ENCODE measurements at regions of chr17 and their contacts with region 1.

Region 1: GRCh38 chr17:49729069-49729468 is 21.3 kb upstream of the SLC35B1 start:
- DNase-seq: no peak
- H3K4me3 ChIP-seq: no peak overlapping the region
- H3K27ac ChIP-seq: no peak overlapping the region
- H3K4me1 ChIP-seq: no peaks in the 10 kb centered on the region
- H3K27me3 ChIP-seq: no peaks in the 10 kb centered on the region
- CTCF ChIP-seq: no peak

Region 2: DNA sequence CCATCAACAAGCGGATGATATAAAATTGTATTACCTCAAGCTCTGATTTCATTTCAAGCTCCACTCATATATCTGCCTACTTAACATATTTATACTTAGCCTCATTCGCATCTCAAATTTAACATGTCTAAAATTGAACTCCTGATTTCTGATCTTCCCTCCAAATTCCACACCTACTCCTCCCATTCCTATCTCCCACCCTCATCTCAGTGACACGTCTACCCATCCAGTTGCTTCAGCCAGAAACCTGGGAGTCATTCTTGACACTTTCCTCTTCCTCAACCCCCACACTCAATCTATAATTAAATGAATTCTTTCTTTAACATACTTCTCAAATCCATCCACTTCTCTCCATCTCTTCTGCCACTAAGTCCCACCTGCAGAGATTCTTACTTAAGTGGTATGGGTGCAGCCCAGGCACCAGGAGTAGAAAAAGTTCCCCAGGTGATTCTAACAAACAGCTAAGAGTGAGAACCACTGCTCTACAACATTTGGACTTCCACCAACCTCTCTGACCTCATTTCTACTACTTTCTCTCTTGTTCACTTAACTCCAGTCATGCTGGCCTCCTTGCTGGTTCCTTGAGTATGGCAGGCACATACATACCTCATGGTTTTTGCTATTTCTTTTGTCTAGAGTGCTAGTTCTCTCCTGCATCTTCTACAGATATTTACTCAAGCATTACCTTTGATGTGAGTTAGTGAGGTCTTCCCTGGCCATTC is 69.2 kb before region 1 on chr17:
- CTCF ChIA-PET with region 1: no interaction called
- dilution Hi-C with region 1: no loop called
- in situ Hi-C with region 1: no loop called
- intact Hi-C with region 1: no loop called
- DNase-seq: no peak
- H3K4me3 ChIP-seq: no peak overlapping the region
- H3K27ac ChIP-seq: no peak overlapping the region
- H3K4me1 ChIP-seq: no peaks in the 10 kb centered on the region
- H3K27me3 ChIP-seq: no peaks in the 10 kb centered on the region
- CTCF ChIP-seq: no peak

Region 3: GRCh38 chr17:49670002-49670401 is 59.1 kb before region 1 on chr17:
- CTCF ChIA-PET with region 1: no interaction called
- dilution Hi-C with region 1: loop called (anchors 5 kb)
- in situ Hi-C with region 1: no loop called
- intact Hi-C with region 1: no loop called
- DNase-seq: no peak
- H3K4me3 ChIP-seq: no peak overlapping the region
- H3K27ac ChIP-seq: no peak overlapping the region
- H3K4me1 ChIP-seq: no peaks in the 10 kb centered on the region
- H3K27me3 ChIP-seq: no peaks in the 10 kb centered on the region
- CTCF ChIP-seq: no peak

Region 4: GRCh38 chr17:49763735-49764558 is 34.9 kb after region 1 on chr17 and contains the start of gene FAM117A:
- CTCF ChIA-PET with region 1: no interaction called
- dilution Hi-C with region 1: loop called (anchors 5 kb)
- in situ Hi-C with region 1: no loop called
- intact Hi-C with region 1: no loop called
- DNase-seq: peak; percentile 99
- H3K4me3 ChIP-seq: peak within 1 kb of the TSS; percentile 58 to 73 (median 66)
- H3K27ac ChIP-seq: peak within 1 kb of the TSS; percentile 23
- H3K4me1 ChIP-seq: peaks cover 23% of the 10 kb centered on the region
- H3K27me3 ChIP-seq: no peaks in the 10 kb centered on the region
- CTCF ChIP-seq: no peak
- total RNA-seq, gene FAM117A: 2.8 to 5.9 TPM

Region 5: GRCh38 chr17:49779739-49780231 is 50.7 kb after region 1 on chr17:
- CTCF ChIA-PET with region 1: no interaction called
- dilution Hi-C with region 1: no loop called
- in situ Hi-C with region 1: no loop called
- intact Hi-C with region 1: no loop called
- DNase-seq: peak; percentile 81
- H3K4me3 ChIP-seq: no peak overlapping the region
- H3K27ac ChIP-seq: no peak overlapping the region
- H3K4me1 ChIP-seq: peaks cover 15% of the 10 kb centered on the region
- H3K27me3 ChIP-seq: no peaks in the 10 kb centered on the region
- CTCF ChIP-seq: peak; percentile 53 to 78

Region 6: DNA sequence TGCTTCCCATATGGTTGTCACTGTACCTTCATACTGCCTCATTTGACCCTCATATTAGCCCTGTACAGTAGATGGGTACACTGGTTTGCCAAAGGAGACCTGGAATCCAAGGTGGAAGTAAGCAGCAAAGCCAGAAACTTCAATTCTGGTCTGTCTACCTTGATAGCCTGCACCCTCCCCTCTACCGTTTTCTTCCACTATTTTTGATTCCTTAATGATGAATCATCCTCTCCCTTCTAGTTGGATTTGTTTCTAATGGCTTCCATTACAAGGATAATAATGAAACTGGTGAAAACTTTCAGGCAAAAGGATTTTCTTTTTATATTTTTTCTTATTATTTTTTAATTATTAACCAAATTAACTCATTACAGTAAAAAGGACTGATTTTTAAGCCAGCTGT is 101.5 kb after region 1 on chr17:
- CTCF ChIA-PET with region 1: no interaction called
- dilution Hi-C with region 1: loop called (anchors 5 kb)
- in situ Hi-C with region 1: loop called in 1 of 2 experiments (anchors 25 kb)
- intact Hi-C with region 1: no loop called
- DNase-seq: no peak
- H3K4me3 ChIP-seq: no peak overlapping the region
- H3K27ac ChIP-seq: no peak overlapping the region
- H3K4me1 ChIP-seq: peaks cover 5% of the 10 kb centered on the region
- H3K27me3 ChIP-seq: no peaks in the 10 kb centered on the region
- CTCF ChIP-seq: no peak

Measured in mammary epithelial cell (primary cell).